Activated CD8-positive, alpha-beta T cell treated with anti-CD3 and anti-CD28 coated beads, Interleukin-2, amount 10 ng/mL, durations not matched to agents 7 days and 5 days (primary cell): ENCODE measurements at regions of chr22 and their contacts with region 1.

Region 1: DNA sequence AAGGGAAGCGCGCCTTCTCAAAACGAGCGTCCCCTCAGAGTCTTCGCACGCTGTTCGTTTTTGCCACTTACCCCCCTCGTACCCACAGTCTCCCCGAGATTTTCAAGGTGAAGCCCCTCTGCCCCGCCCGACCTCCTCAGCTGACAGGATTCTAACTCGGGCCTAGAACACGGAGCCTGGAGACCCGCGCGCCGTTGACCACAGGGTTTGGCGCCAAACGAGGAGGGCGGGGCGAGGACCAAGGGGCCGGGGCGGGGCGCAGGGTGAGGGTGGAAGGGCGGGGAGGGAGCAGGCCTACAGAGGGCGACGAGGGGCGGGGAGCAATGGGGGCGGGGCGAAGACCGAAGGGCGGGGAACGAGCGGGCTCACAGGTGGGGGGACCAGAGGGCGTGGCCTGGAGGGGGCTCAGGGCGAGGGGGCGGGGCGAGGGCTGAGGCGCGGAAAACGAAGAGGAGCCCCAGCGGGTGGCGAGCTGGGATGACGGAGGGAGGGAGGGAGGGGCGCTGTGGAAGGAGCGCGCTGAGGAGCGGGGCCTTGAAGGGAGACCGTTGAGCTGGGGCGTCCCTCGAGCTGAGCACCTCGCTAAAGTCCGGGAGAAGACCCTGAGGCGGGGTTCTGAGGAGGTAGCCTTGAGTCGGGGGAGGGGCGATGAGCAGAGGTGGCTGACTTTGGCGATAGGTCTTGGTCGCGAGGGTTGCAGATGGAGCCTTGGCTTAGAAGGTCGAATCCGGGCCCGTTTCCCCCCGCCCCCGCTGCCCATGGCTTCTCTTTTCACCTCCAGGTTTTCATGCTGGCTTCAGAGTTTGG is at the start of gene DMC1:
- DNase-seq: peak; percentile 99
- ATAC-seq: peak; percentile 88
- H3K4me3 Mint-ChIP-seq: peak within 1 kb of the TSS; percentile 85
- H3K27ac Mint-ChIP-seq: peak within 1 kb of the TSS; percentile 98
- H3K4me1 Mint-ChIP-seq: peaks cover 22% of the 10 kb centered on the region
- H3K27me3 Mint-ChIP-seq: no peaks in the 10 kb centered on the region
- total RNA-seq, gene DMC1: 10.1 to 12.1 TPM

Region 2: DNA sequence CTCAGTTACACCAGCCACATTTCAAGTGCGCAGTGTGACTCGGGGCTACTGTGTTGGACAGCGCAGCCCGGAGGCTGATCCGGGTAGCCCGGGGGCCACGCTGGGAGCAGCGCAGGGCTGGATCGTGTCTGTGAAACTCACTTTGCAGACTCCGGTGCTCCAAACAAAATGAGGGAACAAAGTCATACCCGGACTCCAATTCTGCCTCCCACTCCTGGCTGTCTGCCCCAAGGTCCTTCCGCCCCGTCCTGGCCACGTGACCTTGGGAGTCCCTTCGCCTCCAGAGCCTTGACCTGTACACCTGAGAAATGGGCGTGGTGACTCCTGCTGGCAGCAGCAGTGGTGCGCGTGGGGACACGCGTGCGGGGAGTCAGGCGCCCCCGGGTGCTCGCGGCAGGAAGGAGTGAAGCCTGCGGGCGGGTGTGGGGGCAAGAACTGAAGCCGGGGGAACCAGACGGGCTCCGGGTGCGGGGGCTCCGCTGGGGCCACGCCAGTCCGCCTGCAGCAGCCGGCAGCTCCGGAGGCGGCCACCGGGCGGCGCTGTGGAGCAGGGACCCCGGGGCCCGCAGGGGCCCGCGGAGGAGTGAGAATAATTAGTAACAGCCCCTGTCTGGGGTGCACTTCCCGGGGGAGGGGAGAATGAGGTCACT is 157.6 kb before region 1 on chr22:
- CTCF ChIA-PET with region 1: interaction called, 18 read pairs
- POLR2A ChIA-PET with region 1: no interaction called
- DNase-seq: peak; percentile 53
- ATAC-seq: peak; percentile 77
- H3K4me3 Mint-ChIP-seq: no peak overlapping the region
- H3K27ac Mint-ChIP-seq: no peak overlapping the region
- H3K4me1 Mint-ChIP-seq: no peaks in the 10 kb centered on the region
- H3K27me3 Mint-ChIP-seq: peaks cover 2% of the 10 kb centered on the region

Region 3: GRCh38 chr22:38485783-38486182 is 84.4 kb before region 1 on chr22:
- CTCF ChIA-PET with region 1: interaction called, 11 read pairs
- POLR2A ChIA-PET with region 1: interaction called, 4 read pairs
- DNase-seq: no peak
- ATAC-seq: no peak
- H3K4me3 Mint-ChIP-seq: no peak overlapping the region
- H3K27ac Mint-ChIP-seq: no peak overlapping the region
- H3K4me1 Mint-ChIP-seq: peaks cover 33% of the 10 kb centered on the region
- H3K27me3 Mint-ChIP-seq: no peaks in the 10 kb centered on the region

Region 4: DNA sequence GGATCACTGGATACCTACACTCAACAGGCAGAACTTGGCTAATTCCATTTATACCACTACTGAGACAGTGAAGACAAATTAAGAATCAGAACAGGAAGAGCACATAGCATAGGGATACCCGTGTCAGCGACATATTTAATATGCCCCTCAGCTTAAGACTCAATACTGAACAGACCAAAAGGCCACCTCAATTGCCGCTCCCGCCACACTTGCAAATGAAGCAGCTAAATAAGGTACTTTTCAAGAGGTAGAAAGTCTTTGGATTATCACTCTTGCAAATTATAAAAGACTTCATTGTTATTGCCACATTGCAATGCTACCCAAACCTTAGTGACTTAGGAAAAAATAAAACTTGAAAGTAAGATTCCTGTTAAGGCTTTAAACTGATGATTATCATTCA is 67.2 kb before region 1 on chr22:
- CTCF ChIA-PET with region 1: interaction called, 19 read pairs
- POLR2A ChIA-PET with region 1: interaction called, 5 read pairs
- DNase-seq: no peak
- ATAC-seq: no peak
- H3K4me3 Mint-ChIP-seq: peak overlapping the region; percentile 99
- H3K27ac Mint-ChIP-seq: peak overlapping the region; percentile 5
- H3K4me1 Mint-ChIP-seq: peaks cover 63% of the 10 kb centered on the region
- H3K27me3 Mint-ChIP-seq: no peaks in the 10 kb centered on the region